ENCODE measurements at regions of chr10 and their contacts with region 1.

Region 1: DNA sequence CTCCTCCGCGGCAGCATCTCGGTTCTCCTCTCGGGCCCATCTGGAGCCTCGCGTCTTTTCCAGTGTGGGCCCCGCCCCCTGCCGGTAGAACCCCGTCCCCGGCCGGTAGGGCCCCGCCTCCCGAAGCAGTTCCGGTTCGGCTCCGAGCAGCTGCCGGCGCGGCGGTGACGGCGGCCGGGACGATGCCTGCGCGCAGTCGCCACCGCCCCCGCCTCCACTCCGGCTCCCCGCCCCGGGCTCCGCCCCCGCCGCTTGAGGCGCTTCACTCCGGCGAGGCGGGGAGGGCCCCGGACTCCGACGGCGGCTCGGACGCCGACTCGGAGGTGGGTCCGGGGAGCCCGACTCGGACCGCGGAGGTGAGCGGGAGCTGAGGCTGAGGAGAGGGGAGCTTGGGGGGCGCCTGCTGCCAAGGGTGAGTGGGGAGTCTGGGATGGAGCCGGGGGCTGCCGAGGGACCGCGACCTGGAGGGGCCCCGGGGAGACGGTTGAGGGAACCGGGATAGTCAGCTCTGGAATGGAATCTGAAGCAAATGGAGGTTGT is at the start of gene SAMD8:
- DNase-seq: peak; percentile 98
- ATAC-seq: peak; percentile 90
- total RNA-seq, gene SAMD8: 23.1 TPM

Region 2: GRCh38 chr10:75229971-75230370 is 118.5 kb after region 1 on chr10:
- intact Hi-C with region 1: loop called (anchors 10 kb)
- DNase-seq: no peak
- ATAC-seq: no peak